MCF 10A (cell line): ENCODE measurements at regions of chr17 and their contacts with region 1.

Region 1: DNA sequence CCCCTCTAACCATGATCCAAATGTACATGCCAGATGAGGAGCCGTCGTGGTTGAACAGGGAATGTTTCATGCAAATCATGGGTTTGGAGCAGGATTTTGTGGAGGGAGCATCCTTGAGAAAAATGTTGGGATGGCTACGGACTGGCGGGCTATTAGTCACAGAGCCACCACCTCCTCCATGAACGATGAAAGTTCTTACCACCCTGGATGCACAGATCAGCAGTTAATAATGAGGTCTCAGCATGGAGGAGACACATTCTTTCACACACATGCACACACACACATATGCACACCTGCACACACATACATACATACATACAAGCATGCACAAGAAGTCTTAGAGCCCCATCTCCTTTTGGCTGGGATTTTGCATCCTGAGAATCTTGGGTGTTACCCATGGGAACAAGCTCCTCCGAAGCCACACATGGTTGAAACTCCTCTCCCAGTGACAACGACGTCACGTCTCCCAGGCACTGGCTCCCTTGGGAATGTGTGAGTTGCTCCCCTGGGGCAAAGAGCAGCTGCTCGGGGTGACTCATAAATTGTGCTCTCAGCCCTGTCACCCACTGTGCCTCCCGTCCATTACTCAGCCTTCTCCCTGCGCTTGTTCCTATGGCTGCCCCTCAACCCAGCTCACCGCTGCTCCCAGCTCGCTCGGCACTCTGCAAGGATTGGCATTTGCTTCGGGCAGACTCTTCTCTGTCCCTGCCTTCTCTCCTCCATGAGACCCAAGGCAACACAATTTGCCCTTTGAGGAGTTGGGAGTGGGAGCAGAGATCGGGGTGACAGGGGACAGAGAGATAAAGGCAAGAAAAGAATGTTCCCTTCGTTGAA is 344.6 kb downstream of the SOX9 start:
- DNase-seq: peak; percentile 97
- H3K4me3 Mint-ChIP-seq: peak overlapping the region; percentile 63
- H3K27ac Mint-ChIP-seq: no peak overlapping the region
- H3K4me1 Mint-ChIP-seq: peaks cover 50% of the 10 kb centered on the region
- H3K27me3 Mint-ChIP-seq: no peaks in the 10 kb centered on the region
- CTCF ChIP-seq: no peak

Region 2: DNA sequence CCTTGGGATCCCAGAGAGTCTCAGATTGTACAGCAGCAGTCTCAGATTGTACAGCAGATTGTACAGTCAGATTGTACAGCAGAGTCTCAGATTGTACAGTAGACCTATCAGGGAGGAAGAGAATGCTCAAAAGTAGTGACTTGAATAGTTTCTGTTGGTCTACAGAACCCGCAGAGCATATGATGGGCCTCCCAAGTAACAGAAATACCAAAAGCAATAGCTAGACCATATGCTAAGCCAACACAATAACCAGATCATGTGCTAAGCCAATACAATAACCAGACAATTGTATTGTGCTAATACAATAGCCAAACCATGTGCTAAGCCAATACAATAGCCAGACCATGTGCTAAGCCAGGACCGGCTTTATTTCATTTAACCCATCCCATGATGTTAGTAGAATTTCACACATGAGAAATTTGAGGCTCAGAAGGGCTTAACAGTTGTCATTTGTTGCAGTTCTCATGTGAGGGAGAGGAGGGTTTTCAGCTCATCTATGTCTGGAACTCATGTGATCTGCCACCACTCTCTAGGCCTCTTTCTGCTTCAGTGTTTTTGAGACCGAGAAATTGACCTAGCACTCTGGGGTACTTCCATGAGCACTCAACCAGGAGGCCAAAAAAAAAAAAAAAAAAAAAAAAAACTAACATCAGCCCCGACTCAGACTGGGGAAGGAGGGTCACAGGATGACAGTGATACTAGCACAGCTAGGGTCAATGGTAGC is 200.6 kb before region 1 on chr17:
- CTCF ChIA-PET with region 1: no interaction called
- POLR2A ChIA-PET with region 1: no interaction called
- intact Hi-C with region 1: no loop called
- DNase-seq: no peak
- H3K4me3 Mint-ChIP-seq: no peak overlapping the region
- H3K27ac Mint-ChIP-seq: no peak overlapping the region
- H3K4me1 Mint-ChIP-seq: no peaks in the 10 kb centered on the region
- H3K27me3 Mint-ChIP-seq: no peaks in the 10 kb centered on the region
- CTCF ChIP-seq: no peak

Region 3: GRCh38 chr17:72421128-72422092 is 44.0 kb before region 1 on chr17:
- CTCF ChIA-PET with region 1: no interaction called
- POLR2A ChIA-PET with region 1: interaction called, 3 read pairs
- intact Hi-C with region 1: loop called (anchors 5 kb)
- DNase-seq: peak; percentile 99
- H3K4me3 Mint-ChIP-seq: no peak overlapping the region
- H3K27ac Mint-ChIP-seq: peak overlapping the region; percentile 57
- H3K4me1 Mint-ChIP-seq: peaks cover 61% of the 10 kb centered on the region
- H3K27me3 Mint-ChIP-seq: no peaks in the 10 kb centered on the region
- CTCF ChIP-seq: no peak

Region 4: GRCh38 chr17:72569148-72569946 is 103.9 kb after region 1 on chr17:
- CTCF ChIA-PET with region 1: no interaction called
- POLR2A ChIA-PET with region 1: no interaction called
- intact Hi-C with region 1: no loop called
- DNase-seq: no peak
- H3K4me3 Mint-ChIP-seq: no peak overlapping the region
- H3K27ac Mint-ChIP-seq: no peak overlapping the region
- H3K4me1 Mint-ChIP-seq: peaks cover 47% of the 10 kb centered on the region
- H3K27me3 Mint-ChIP-seq: no peaks in the 10 kb centered on the region
- CTCF ChIP-seq: no peak